Calu3 (cell line): ENCODE measurements at regions of chr2 and their contacts with region 1.

Region 1: DNA sequence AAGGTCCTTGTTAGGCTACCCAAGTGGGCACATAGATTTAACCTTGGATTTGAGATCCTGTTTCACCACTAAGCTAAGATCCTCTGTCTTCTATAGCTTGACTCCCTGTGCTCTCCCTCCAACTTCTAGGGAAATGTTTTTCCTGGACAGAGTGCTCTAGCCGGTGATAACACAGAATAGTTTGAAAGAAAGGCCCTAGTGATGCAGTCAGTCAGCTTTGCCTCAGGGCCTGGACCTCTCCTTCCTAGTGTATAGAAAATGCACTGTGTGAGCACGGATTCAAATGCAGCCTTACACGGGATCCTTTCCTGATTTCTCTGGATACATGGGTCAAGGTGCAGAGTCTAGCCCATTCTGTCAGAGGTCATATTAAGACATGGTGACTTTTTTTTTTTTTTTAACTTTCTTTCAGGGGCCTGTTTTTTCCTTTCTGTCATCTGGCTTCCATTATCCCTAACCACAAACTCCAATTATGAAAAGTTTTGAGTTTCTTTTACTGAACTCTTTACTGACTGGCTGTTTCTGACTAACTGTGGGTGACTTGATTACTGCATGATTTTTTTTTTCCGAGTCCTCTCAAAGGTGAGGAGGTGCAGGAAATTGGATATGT is 122.6 kb downstream of the LRP1B start:
- DNase-seq: no peak
- H3K4me3 Mint-ChIP-seq: no peak overlapping the region
- H3K27ac Mint-ChIP-seq: no peak overlapping the region
- H3K4me1 Mint-ChIP-seq: no peaks in the 10 kb centered on the region
- H3K27me3 Mint-ChIP-seq: no peaks in the 10 kb centered on the region
- CTCF ChIP-seq: no peak

Region 2: DNA sequence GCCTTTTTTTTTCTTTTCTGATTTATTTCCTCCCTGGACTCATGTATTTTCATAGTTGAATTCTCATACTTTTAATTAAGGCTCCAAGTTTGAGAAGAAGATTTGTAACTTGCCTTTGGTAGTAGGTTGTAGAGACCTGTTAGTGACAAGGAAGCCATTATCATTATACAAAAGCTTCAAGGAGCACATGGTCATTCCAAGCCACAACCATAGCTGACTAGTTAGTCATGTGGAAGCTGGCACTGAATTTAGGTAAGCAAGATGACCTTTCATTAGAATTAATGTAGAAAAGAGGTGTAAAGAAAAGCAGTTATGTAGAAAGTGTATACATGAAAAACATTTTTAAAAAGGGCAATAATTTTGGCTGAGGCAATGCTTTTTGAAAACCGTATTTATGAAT is 32.9 kb after region 1 on chr2:
- CTCF ChIA-PET with region 1: no interaction called
- intact Hi-C with region 1: loop called (anchors 2 kb)
- DNase-seq: peak; percentile 6
- H3K4me3 Mint-ChIP-seq: no peak overlapping the region
- H3K27ac Mint-ChIP-seq: peak overlapping the region; percentile 39
- H3K4me1 Mint-ChIP-seq: peaks cover 18% of the 10 kb centered on the region
- H3K27me3 Mint-ChIP-seq: no peaks in the 10 kb centered on the region
- CTCF ChIP-seq: no peak